Activated naive CD4-positive, alpha-beta T cell treated with anti-CD3 and anti-CD28 coated beads for 36 hours (primary cell): ENCODE measurements at regions of chr1 and their contacts with region 1.

Region 1: GRCh38 chr1:23422241-23423030 is 2.1 kb downstream of the TCEA3 start:
- DNase-seq: peak; percentile 75
- H3K4me3 Mint-ChIP-seq: peak overlapping the region; percentile 85
- H3K27ac Mint-ChIP-seq: peak overlapping the region; percentile 2
- H3K4me1 Mint-ChIP-seq: peaks cover 21% of the 10 kb centered on the region
- H3K27me3 Mint-ChIP-seq: no peaks in the 10 kb centered on the region

Region 2: GRCh38 chr1:22488319-22488718 is 934.1 kb before region 1 on chr1:
- CTCF ChIA-PET with region 1: no interaction called
- intact Hi-C with region 1: no loop called
- DNase-seq: no peak
- H3K4me3 Mint-ChIP-seq: no peak overlapping the region
- H3K27ac Mint-ChIP-seq: no peak overlapping the region
- H3K4me1 Mint-ChIP-seq: peaks cover 17% of the 10 kb centered on the region
- H3K27me3 Mint-ChIP-seq: no peaks in the 10 kb centered on the region

Region 3: DNA sequence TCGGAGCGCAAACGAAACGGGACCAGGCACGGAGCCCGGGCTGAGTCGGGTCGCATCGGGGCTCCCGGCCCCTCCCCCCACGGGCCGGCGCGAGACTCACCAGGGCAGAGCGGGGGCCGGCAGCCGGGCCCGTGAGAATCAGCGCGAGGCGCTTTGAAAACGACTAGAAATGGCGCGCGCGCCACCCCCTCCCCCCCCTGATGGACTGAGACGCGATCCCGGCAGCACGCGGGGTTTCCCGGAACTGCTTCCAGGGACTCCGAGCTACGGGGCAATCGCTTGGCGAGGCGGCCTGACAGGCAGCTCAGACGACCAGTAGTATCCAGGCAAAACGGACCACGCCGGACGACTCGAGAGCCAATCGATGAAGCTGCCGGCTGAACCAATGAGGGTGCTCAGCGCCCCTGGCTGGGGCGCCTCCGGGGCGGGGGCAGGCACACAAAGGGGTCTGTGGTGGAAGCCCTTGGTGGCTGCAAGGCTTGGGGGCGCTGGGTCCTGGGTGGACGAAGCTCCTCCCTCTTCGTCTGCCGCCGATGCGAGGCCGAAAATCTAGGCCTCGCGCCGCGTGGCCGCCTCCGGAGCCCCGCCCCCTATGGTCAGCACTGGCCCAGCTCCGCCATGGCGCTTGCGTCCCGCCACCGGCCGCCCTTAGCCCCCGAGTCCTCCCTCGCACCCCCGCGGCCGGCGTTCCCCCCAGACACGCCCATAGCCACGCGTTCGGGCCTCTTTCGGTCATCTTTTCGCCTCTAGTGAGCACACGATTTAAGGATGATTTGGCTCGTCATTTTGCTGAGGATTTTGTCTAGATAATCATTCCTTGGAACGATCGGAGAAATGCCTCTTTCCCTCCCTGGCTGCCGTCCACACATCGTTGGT is 78.1 kb before region 1 on chr1 and contains the start of gene HNRNPR:
- CTCF ChIA-PET with region 1: interaction called, 6 read pairs
- intact Hi-C with region 1: loop called (anchors 2 kb)
- DNase-seq: peak; percentile 100
- H3K4me3 Mint-ChIP-seq: peak within 1 kb of the TSS; percentile 83
- H3K27ac Mint-ChIP-seq: peak within 1 kb of the TSS; percentile 93
- H3K4me1 Mint-ChIP-seq: peaks cover 32% of the 10 kb centered on the region
- H3K27me3 Mint-ChIP-seq: no peaks in the 10 kb centered on the region
- total RNA-seq, gene HNRNPR: 203 to 208 TPM

Region 4: GRCh38 chr1:23403735-23404486 is 18.5 kb before region 1 on chr1:
- CTCF ChIA-PET with region 1: interaction called, 10 read pairs
- intact Hi-C with region 1: no loop called
- DNase-seq: peak; percentile 94
- H3K4me3 Mint-ChIP-seq: no peak overlapping the region
- H3K27ac Mint-ChIP-seq: no peak overlapping the region
- H3K4me1 Mint-ChIP-seq: peaks cover 11% of the 10 kb centered on the region
- H3K27me3 Mint-ChIP-seq: no peaks in the 10 kb centered on the region

Region 5: GRCh38 chr1:23456226-23456625 is 33.8 kb after region 1 on chr1:
- CTCF ChIA-PET with region 1: no interaction called
- intact Hi-C with region 1: no loop called
- DNase-seq: no peak
- H3K4me3 Mint-ChIP-seq: no peak overlapping the region
- H3K27ac Mint-ChIP-seq: no peak overlapping the region
- H3K4me1 Mint-ChIP-seq: peaks cover 16% of the 10 kb centered on the region
- H3K27me3 Mint-ChIP-seq: no peaks in the 10 kb centered on the region

Region 6: DNA sequence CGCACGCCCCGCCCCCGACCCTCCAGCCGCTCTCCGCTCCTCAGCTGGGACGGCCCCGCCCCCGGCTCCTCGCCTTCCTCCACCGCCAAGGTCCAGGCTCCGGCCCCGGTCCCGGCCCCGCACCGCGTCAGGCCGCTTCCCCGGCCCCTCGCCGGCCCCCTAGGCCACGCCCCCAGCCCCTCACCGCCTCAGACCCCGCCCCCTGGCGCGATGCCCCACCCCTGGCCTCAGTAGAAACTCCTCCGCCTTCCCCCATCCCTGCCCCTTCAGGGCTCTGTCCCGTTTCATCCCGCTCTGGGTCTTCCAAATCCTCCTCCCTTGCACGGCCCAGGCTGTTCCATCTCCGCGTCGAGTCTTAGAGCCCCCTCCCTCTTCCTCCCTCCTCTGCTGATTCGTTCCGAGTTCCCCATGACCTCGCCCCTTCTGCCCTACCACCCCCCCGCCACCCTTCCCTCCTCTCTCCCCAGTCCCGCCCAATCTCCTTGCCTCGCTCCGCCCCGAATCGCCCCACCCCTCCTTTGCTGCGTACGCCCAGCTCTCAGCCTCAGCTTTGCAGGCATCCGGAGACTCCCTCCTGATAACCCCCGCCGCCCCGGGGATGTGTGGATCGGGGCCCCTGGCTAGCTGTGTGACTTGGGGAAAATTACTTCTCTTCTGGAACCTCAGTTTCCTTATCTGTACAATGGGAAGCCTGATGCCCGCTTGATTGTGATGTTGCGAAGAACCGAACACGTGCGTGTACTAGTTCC is 62.0 kb after region 1 on chr1:
- CTCF ChIA-PET with region 1: no interaction called
- intact Hi-C with region 1: loop called (anchors 5 kb)
- DNase-seq: peak; percentile 93
- H3K4me3 Mint-ChIP-seq: peak overlapping the region; percentile 83
- H3K27ac Mint-ChIP-seq: no peak overlapping the region
- H3K4me1 Mint-ChIP-seq: peaks cover 12% of the 10 kb centered on the region
- H3K27me3 Mint-ChIP-seq: peaks cover 15% of the 10 kb centered on the region

Region 7: GRCh38 chr1:23530747-23531561 is 108.5 kb after region 1 on chr1 and contains the start of gene E2F2:
- CTCF ChIA-PET with region 1: no interaction called
- intact Hi-C with region 1: loop called (anchors 5 kb)
- DNase-seq: peak; percentile 87
- H3K4me3 Mint-ChIP-seq: peak within 1 kb of the TSS; percentile 91
- H3K27ac Mint-ChIP-seq: peak within 1 kb of the TSS; percentile 95
- H3K4me1 Mint-ChIP-seq: peaks cover 56% of the 10 kb centered on the region
- H3K27me3 Mint-ChIP-seq: peaks cover 2% of the 10 kb centered on the region
- total RNA-seq, gene E2F2: 31.3 to 33.8 TPM